K562 (cell line): ENCODE measurements at regions of chr6 and their contacts with region 1.

Region 1: DNA sequence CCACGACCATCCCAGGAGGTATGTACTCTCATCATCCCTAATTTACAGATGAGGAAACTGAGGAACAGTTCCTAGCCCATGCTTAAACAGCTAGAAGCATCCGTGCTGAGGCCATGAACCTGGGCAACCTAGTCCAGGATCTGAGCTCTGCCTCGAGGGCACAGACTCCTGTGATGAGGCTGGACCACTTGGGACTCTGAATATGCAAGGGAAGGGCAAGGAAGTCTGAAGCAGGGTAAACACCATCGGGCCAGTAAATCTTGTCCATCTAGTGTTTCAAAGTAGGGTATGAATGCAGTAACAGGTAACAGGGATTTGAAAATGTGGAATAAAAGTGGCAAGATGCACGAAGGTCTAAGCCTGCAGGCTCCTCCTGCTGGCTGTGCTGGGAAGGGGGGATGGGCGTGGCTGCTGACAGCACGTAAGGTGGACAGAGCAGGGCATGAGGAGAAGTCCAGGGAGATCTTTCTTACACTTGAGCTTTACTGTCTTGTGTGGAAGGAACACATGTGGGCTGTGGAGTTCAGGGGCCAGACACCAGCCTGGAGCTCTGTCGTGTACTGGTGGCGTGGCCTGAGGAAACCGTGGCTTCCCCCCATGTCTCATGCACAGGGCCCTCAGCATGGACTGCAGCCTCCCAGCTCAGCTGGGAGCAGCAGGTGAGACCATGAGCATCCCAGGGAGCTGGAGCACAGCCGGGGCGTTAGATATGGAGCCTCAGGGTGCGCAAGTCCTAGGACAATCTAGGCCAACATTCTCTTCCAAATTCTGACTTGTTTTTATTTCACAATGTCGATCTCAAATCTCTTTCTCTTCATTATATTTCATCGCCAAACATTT is 84.6 kb downstream of the SLC22A23 start:
- DNase-seq: peak; percentile 64 to 74 (median 67)
- ATAC-seq: peak; percentile 94
- H3K4me3 ChIP-seq: no peak overlapping the region
- H3K27ac ChIP-seq: no peak overlapping the region
- H3K4me1 ChIP-seq: peaks cover 6 to 10% of the 10 kb centered on the region in 2 experiments; a peak in 4 of 5 replicates
- H3K27me3 ChIP-seq: no peaks in the 10 kb centered on the region
- CTCF ChIP-seq: peak; percentile 62 to 79 (median 73)
- EP300 ChIP-seq: no peak
- POLR2A ChIP-seq: no peak
- RAD21 ChIP-seq: peak; percentile 42 to 77; a peak in 3 of 4 replicates

Region 2: DNA sequence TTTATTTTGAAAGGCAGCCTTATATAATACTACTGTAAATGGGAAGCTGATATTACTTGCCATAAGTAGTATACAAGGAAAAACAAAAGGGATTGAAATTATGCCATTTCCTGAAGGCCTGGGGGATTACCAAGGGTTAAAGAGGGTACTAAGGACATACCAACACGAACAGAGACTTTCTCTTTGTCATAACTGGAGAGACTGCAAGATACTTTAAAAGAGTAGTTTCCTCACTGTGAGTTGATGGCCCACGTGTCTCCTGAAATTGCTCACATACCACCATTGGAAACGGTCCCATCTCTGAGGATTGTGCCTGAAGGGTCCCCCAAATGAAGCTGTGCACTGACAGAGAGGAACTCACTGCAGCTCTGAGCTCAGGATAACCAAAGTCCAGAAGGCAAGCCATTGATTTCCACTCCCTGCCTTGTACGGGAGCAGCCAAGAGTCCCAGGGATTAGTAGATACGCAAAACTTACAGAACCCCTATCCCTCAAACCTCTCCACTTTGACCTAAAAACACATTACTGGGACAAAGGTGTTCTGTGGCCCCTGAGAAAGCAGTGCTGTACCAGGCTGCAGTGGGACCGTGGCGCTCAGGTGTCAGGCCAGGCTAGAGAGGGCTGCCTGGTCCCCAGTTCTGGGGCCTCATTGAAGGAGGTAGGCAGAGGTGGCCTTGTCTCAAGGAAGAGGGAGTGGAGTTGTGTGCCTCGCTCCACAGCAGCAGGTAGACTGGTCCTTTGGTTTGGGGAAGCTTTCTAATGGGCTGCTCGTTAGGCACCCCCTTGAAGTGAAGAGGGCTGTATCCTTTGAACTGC is 98.3 kb before region 1 on chr6:
- CTCF ChIA-PET with region 1: no interaction called
- POLR2A ChIA-PET with region 1: no interaction called
- in situ Hi-C with region 1: no loop called
- intact Hi-C with region 1: no loop called
- DNase-seq: no peak
- ATAC-seq: no peak
- H3K4me3 ChIP-seq: no peak overlapping the region
- H3K27ac ChIP-seq: no peak overlapping the region
- H3K4me1 ChIP-seq: peaks cover 0 to 7% of the 10 kb centered on the region in 2 experiments; a peak in 2 of 5 replicates
- H3K27me3 ChIP-seq: no peaks in the 10 kb centered on the region
- CTCF ChIP-seq: no peak
- EP300 ChIP-seq: no peak
- POLR2A ChIP-seq: 0 out of 2 replicates have a peak, but pooled peaks have one; percentile 32
- RAD21 ChIP-seq: no peak

Region 3: GRCh38 chr6:3383525-3383924 is 11.3 kb after region 1 on chr6:
- CTCF ChIA-PET with region 1: no interaction called
- POLR2A ChIA-PET with region 1: interaction called, 15 read pairs
- in situ Hi-C with region 1: no loop called
- intact Hi-C with region 1: no loop called
- DNase-seq: peak; percentile 72 to 94 (median 76)
- ATAC-seq: peak; percentile 89
- H3K4me3 ChIP-seq: no peak overlapping the region
- H3K27ac ChIP-seq: no peak overlapping the region
- H3K4me1 ChIP-seq: peaks cover 33 to 44% of the 10 kb centered on the region in 2 experiments
- H3K27me3 ChIP-seq: no peaks in the 10 kb centered on the region
- CTCF ChIP-seq: no peak
- EP300 ChIP-seq: peak; percentile 88
- POLR2A ChIP-seq: no peak
- RAD21 ChIP-seq: peak; percentile 26 to 41

Region 4: DNA sequence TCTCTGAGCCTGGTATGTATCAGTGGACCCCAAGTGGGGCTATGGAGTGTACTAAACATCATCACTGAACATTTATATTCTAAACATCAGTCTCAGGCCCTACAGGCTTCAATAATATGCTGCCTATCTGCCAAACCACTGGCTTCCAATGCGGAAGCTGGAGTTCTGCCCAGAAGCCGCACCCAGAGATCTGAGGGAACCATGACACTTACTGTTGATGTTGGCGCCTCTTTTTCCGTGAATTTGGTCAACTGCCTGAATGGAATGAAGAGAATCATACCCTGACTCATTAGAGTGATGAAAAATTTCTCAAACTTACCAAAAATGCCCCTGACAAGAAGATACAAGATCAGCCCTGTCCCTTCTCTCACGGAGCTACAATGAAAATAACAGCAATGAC is 18.5 kb after region 1 on chr6:
- CTCF ChIA-PET with region 1: no interaction called
- POLR2A ChIA-PET with region 1: interaction called, 17 read pairs
- in situ Hi-C with region 1: no loop called
- intact Hi-C with region 1: no loop called
- DNase-seq: peak; percentile 60 to 82 (median 80)
- ATAC-seq: peak; percentile 40
- H3K4me3 ChIP-seq: no peak overlapping the region
- H3K27ac ChIP-seq: peak overlapping the region; percentile 53; the same call in 2 of the 3 replicates
- H3K4me1 ChIP-seq: peaks cover 48 to 52% of the 10 kb centered on the region in 2 experiments
- H3K27me3 ChIP-seq: no peaks in the 10 kb centered on the region
- CTCF ChIP-seq: no peak
- EP300 ChIP-seq: peak; percentile 64; the same call in 1 of the 2 replicates
- POLR2A ChIP-seq: no peak
- RAD21 ChIP-seq: no peak